Activated CD4-positive, alpha-beta T cell treated with anti-CD3 and anti-CD28 coated beads, Interleukin-2, amount 10 ng/mL, durations not matched to agents 24 days and 14 days (primary cell): ENCODE measurements at regions of chr3 and their contacts with region 1.

Region 1: GRCh38 chr3:11846281-11847034 is at the start of gene TAMM41:
- DNase-seq: peak; percentile 96
- H3K4me3 Mint-ChIP-seq: peak within 1 kb of the TSS; percentile 96
- H3K27ac Mint-ChIP-seq: peak within 1 kb of the TSS; percentile 94
- H3K4me1 Mint-ChIP-seq: peaks cover 19% of the 10 kb centered on the region
- H3K27me3 Mint-ChIP-seq: no peaks in the 10 kb centered on the region
- total RNA-seq, gene TAMM41: 34.2 and 35.6 TPM in 2 replicates

Region 2: DNA sequence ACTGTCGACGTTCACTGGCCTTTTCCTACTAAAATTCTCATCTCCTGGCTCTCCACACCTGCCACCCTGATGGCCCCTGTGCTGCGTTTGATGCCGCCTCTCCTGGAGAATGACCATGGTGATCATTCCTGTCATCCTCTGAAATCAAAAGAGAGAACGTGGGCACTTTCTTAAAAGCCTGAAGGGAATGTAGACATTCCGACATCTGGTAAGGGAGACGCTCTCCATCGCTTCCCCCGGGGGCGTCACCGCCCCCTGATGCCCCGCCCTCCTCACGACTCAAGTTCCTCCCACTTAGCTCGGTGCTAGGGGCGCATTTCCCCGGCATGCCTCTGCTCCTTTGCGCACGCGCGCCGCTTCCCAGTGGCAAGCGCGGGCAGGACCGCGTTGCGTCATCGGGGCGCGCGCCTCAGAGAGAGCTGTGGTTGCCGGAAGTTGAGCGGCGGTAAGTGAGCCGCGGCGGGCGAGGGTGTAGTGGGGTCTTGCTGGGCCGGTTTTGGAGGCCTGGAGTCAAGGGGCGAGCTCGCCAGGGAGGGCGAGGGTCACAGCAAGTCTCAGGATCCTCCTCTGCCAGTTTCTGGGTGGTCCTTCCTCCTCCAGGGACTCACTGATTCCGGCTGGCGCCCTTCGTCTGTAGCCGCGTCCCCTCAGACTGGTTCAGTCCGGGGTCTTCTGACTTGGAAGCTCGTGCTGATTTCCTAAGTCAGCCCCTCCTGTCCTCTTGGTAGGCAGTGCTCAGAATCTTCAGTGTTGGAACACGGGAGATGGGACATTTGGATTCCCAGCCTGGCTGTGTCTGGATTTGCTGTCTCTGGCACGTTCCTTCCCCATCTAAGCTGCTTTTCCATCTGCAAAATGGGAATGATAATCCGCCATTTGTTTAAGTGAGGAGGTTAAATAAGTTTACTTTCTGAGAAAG is 574.2 kb before region 1 on chr3 and contains the start of gene ATG7:
- intact Hi-C with region 1: loop called (anchors 5 kb)
- DNase-seq: peak; percentile 99
- H3K4me3 Mint-ChIP-seq: peak within 1 kb of the TSS; percentile 96
- H3K27ac Mint-ChIP-seq: peak within 1 kb of the TSS; percentile 94
- H3K4me1 Mint-ChIP-seq: peaks cover 43% of the 10 kb centered on the region
- H3K27me3 Mint-ChIP-seq: peaks cover 4% of the 10 kb centered on the region
- total RNA-seq, gene ATG7: 37.7 and 41.4 TPM in 2 replicates

Region 3: DNA sequence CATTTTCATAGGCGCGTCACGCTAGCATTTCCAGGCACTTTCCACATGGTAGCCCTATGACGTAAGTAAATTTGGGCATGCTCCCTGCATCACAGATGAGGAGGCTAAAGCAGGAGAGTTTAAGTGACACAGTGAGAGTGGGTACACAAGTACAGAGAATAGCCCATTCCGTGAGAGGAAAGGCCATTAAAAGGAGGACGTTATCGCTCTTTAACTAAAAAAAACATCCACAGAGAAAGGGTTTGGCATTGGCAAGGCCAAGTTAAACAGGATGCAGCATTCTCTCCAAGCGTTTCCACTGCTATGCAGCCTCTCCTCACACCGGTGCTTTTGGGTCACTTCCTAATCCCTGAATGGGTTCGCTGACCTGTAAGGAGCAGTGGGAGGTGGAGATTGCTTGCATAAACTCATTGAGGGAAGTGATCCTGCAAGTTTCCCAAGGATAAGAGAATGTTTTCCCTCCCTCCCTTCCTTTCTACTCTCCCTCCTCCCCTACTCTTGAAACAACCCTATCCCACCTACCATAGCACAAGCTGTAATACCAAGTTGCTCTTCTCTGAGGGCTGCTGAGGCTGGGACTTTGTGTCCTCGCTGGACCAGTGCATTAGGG is 350.4 kb before region 1 on chr3:
- intact Hi-C with region 1: no loop called
- DNase-seq: no peak
- H3K4me3 Mint-ChIP-seq: no peak overlapping the region
- H3K27ac Mint-ChIP-seq: no peak overlapping the region
- H3K4me1 Mint-ChIP-seq: no peaks in the 10 kb centered on the region
- H3K27me3 Mint-ChIP-seq: no peaks in the 10 kb centered on the region

Region 4: DNA sequence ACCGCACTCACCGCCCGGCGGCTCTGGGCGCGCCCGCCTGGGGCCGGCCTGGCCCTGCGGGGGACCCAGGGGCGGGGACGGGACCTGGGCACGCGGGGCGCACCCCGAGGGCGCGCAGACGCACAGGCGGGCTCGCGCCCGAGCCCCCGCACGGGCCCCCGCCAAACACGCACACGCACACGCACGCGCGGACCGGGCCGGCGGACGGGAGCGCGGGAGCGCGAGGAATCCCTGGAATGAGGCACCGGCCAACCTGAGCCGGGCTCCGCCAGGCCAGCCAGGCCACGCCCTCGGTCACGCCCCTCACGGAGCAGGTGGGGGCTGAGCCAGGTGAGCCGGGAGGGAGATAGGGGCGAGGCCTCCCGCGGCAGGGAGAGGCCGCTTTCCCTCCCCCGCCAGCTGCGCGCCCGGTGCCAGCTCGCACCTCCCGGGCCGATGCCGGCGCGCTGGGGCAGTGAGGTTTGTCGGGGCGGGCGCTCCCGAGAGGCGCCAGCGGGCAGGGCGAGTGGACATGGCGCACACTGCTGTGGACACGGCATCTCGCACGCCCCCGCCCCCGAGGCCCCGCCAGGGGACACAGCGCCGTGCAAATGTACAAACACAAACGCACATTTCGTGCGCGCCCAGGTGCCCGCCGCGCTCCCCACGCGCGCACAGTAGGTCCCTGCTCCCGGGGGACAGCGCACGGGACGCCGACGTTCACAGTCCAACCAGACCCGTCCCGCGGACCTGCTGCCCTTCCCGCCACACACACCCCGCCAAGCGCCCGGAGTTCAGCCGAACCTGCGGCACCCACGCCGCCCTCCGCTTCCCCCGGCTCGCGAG is 126.8 kb before region 1 on chr3:
- intact Hi-C with region 1: loop called (anchors 2 kb)
- DNase-seq: peak; percentile 87
- H3K4me3 Mint-ChIP-seq: peak overlapping the region; percentile 93
- H3K27ac Mint-ChIP-seq: peak overlapping the region; percentile 37
- H3K4me1 Mint-ChIP-seq: peaks cover 20% of the 10 kb centered on the region
- H3K27me3 Mint-ChIP-seq: peaks cover 29% of the 10 kb centered on the region

Region 5: DNA sequence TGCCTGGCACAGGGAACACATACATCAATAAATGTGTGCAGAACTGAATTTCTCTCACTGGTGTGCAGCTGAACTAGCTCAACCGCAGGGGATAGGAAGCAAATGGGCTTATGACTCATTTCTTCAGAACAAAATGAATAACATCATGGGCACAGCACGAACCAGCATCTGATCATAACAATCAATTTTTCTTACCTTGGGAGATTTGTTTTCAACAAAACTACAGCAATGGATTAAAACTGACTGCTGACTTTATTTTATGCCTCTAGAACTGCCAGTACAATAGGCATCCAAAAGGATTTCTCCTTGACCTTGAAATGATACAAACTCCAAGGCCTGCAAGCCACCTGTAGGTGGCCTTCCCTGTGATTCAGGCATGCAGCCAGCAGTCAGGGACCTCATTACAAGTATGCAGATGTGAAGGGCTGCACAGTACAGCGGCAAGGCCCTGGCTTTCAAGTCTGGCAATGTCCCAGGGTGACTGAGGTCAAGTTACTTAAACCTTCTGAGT is 25.9 kb before region 1 on chr3:
- intact Hi-C with region 1: loop called (anchors 2 kb)
- DNase-seq: peak; percentile 64
- H3K4me3 Mint-ChIP-seq: peak overlapping the region; percentile 31
- H3K27ac Mint-ChIP-seq: peak overlapping the region; percentile 15
- H3K4me1 Mint-ChIP-seq: peaks cover 10% of the 10 kb centered on the region
- H3K27me3 Mint-ChIP-seq: no peaks in the 10 kb centered on the region

Region 6: DNA sequence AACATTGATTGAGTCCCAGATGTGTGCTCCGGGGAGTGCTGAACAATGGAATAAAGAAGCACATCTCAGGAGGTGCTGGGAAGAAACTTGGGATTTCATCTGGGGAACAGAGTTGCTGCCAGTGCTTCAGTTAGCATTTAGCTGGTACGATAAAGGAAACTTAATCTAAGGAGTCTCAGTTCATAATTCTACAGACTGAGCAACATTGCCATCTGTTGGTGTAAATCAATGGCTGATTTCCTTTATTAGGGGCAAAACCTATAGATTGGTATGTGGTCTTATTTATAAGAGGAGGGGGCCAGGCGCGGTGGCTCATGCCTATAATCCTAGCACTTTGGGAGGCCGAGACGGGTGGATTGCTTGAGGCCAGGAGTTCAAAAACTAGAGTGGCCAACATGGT is 690.0 kb after region 1 on chr3:
- intact Hi-C with region 1: no loop called
- DNase-seq: no peak
- H3K4me3 Mint-ChIP-seq: no peak overlapping the region
- H3K27ac Mint-ChIP-seq: no peak overlapping the region
- H3K4me1 Mint-ChIP-seq: peaks cover 4% of the 10 kb centered on the region
- H3K27me3 Mint-ChIP-seq: no peaks in the 10 kb centered on the region

Region 7: GRCh38 chr3:12556671-12557472 is 710.4 kb after region 1 on chr3 and contains the start of gene MKRN2:
- intact Hi-C with region 1: loop called (anchors 2 kb)
- DNase-seq: peak; percentile 96
- H3K4me3 Mint-ChIP-seq: peak within 1 kb of the TSS; percentile 98
- H3K27ac Mint-ChIP-seq: peak within 1 kb of the TSS; percentile 91
- H3K4me1 Mint-ChIP-seq: peaks cover 44% of the 10 kb centered on the region
- H3K27me3 Mint-ChIP-seq: peaks cover 25% of the 10 kb centered on the region
- total RNA-seq, gene MKRN2: 23.2 and 28.2 TPM in 2 replicates